Naive thymus-derived CD4-positive, alpha-beta T cell (primary cell): ENCODE measurements at regions of chr20 and their contacts with region 1.

Region 1: DNA sequence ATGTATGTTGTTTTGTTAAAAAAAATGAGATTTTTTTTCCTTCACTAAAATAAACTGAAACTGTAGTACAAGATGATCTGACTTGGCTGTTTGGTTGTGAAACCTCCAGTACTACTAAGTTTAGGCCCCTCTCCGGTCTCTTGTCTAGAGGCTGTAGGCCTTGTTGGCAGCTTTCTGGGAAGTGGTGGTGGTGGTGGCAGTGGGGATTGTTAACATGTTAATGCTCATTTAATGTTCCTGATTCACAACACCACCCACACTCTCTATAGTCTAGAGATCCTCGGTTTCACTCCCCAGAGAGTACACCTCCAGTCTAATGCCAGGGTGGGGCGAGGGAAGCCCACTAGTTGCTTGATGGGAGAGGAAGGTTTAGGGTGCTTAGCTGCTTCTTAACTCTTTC is 24.1 kb downstream of the STK4 start:
- DNase-seq: peak in 1 of 9 donors; percentile 56
- ATAC-seq: peak; percentile 55
- H3K4me3 ChIP-seq: peak overlapping the region; percentile 42
- H3K4me3 Mint-ChIP-seq: peak overlapping the region; percentile 77 to 95 (median 88)
- H3K27ac ChIP-seq: peak overlapping the region; percentile 76
- H3K27ac Mint-ChIP-seq: peak overlapping the region; percentile 72 to 96 (median 92)
- H3K4me1 ChIP-seq: peaks cover 35 to 66% of the 10 kb centered on the region in 2 donors
- H3K4me1 Mint-ChIP-seq: peaks cover 57 to 97% (median 80%) of the 10 kb centered on the region in 7 donors
- H3K27me3 ChIP-seq: no peaks in the 10 kb centered on the region
- H3K27me3 Mint-ChIP-seq: no peaks in the 10 kb centered on the region

Region 2: DNA sequence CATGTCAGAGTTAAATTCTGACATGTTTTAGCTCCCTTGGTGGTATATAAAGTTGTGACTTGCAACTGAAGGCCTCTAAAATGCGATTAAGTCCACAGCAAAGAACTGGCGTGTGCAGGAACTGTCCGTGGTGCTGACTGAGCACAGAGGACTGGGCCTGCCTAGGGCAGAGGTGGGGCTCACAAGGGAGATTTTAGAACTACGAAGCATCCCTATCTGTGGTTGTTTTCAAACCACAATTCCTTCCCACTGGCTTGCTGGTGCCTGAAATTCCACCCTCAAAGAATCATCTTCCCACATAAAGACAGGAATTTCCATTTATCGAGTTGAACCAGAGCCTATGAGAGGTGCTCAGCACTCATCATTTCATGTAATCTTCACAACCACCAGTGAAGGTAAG is 210.2 kb before region 1 on chr20:
- CTCF ChIA-PET with region 1: no interaction called
- POLR2A ChIA-PET with region 1: no interaction called
- intact Hi-C with region 1: no loop called
- DNase-seq: peak in 5 of 9 donors; percentile 15 to 44 (median 32)
- ATAC-seq: no peak
- H3K4me3 ChIP-seq: no peak overlapping the region
- H3K4me3 Mint-ChIP-seq: no peak overlapping the region
- H3K27ac ChIP-seq: no peak overlapping the region
- H3K27ac Mint-ChIP-seq: no peak overlapping the region
- H3K4me1 ChIP-seq: no peaks in the 10 kb centered on the region
- H3K4me1 Mint-ChIP-seq: no peaks in the 10 kb centered on the region
- H3K27me3 ChIP-seq: peaks cover 0 to 3% of the 10 kb centered on the region in 2 donors
- H3K27me3 Mint-ChIP-seq: peaks cover 3 to 27% (median 26%) of the 10 kb centered on the region in 5 donors

Region 3: DNA sequence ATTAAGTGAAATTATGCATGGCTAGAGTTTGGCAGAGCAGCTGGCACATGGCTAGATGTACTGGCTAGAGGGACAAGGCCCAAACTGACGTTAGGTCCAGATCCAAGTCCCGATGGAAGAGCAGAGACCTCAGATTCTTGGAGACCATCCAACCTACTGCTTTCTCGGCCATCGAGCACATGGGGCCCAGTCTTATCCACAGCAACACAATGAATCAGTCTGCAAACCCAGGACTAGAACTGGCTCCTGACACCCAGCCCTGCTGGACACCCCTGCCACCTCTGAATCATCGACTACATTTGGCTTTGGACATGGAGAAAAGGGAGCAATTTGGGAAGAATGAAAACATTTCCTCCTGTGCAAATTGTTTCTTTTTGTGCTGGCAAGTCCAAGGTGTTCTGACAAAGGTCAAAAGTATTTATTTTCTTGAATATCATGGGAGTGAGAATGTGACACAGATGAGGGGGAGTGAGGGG is 128.9 kb before region 1 on chr20:
- CTCF ChIA-PET with region 1: no interaction called
- POLR2A ChIA-PET with region 1: no interaction called
- intact Hi-C with region 1: no loop called
- DNase-seq: no peak
- ATAC-seq: no peak
- H3K4me3 ChIP-seq: no peak overlapping the region
- H3K4me3 Mint-ChIP-seq: no peak overlapping the region
- H3K27ac ChIP-seq: no peak overlapping the region
- H3K27ac Mint-ChIP-seq: peak overlapping the region in 1 of 9 donors; percentile 43
- H3K4me1 ChIP-seq: no peaks in the 10 kb centered on the region
- H3K4me1 Mint-ChIP-seq: peaks cover 0 to 13% (median 8%) of the 10 kb centered on the region in 7 donors
- H3K27me3 ChIP-seq: no peaks in the 10 kb centered on the region
- H3K27me3 Mint-ChIP-seq: peaks cover 0 to 9% (median 0%) of the 10 kb centered on the region in 5 donors

Region 4: GRCh38 chr20:44960103-44960852 is 30.1 kb before region 1 on chr20 and contains the start of gene TOMM34:
- CTCF ChIA-PET with region 1: interaction called, 4 read pairs
- POLR2A ChIA-PET with region 1: interaction called, 6 read pairs
- intact Hi-C with region 1: loop called in 1 of 2 experiments (anchors 5 kb)
- DNase-seq: peak; percentile 87 to 98 (median 91)
- ATAC-seq: peak; percentile 97
- H3K4me3 ChIP-seq: peak within 1 kb of the TSS; percentile 71
- H3K4me3 Mint-ChIP-seq: peak within 1 kb of the TSS; percentile 84 to 100 (median 96)
- H3K27ac ChIP-seq: peak within 1 kb of the TSS; percentile 75
- H3K27ac Mint-ChIP-seq: peak within 1 kb of the TSS; percentile 79 to 98 (median 93)
- H3K4me1 ChIP-seq: peaks cover 22 to 24% of the 10 kb centered on the region in 2 donors
- H3K4me1 Mint-ChIP-seq: peaks cover 26 to 71% (median 58%) of the 10 kb centered on the region in 7 donors
- H3K27me3 ChIP-seq: no peaks in the 10 kb centered on the region
- H3K27me3 Mint-ChIP-seq: no peaks in the 10 kb centered on the region
- total RNA-seq, gene TOMM34: 7.0 to 22.5 (median 8.6) TPM

Region 5: DNA sequence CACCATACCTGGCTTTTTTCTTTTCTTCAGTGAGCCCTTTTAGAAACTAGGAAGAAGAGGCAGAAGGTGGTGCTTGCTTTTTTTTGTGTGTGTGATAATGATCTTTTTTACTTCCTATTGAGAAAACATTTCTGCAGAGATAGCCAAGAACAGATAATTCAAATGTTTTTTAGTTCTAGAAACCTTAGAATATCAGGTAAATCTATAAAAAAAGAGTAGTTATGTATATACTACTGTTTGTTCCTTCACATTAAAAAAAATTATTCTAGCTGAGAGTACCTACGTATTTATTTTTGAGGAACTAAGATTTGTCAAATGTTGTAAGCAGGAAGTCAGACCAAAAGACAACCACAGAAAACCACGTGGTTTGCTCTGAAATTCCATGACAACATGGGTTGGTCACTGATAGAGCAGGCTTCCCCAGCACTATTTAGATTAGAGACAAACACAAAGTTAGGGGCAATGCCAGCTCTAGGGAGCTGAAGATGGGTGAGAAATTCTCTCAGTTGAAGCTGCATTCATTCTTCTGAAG is 11.3 kb before region 1 on chr20:
- CTCF ChIA-PET with region 1: no interaction called
- POLR2A ChIA-PET with region 1: interaction called, 38 read pairs
- intact Hi-C with region 1: loop called in 1 of 2 experiments (anchors 1 kb)
- DNase-seq: peak in 8 of 9 donors; percentile 60 to 93 (median 86)
- ATAC-seq: peak; percentile 93
- H3K4me3 ChIP-seq: peak overlapping the region; percentile 40
- H3K4me3 Mint-ChIP-seq: peak overlapping the region; percentile 74 to 90 (median 79)
- H3K27ac ChIP-seq: peak overlapping the region; percentile 98
- H3K27ac Mint-ChIP-seq: peak overlapping the region; percentile 86 to 98 (median 97)
- H3K4me1 ChIP-seq: peaks cover 64 to 70% of the 10 kb centered on the region in 2 donors
- H3K4me1 Mint-ChIP-seq: peaks cover 71 to 96% (median 90%) of the 10 kb centered on the region in 7 donors
- H3K27me3 ChIP-seq: no peaks in the 10 kb centered on the region
- H3K27me3 Mint-ChIP-seq: no peaks in the 10 kb centered on the region